Mammary epithelial cell (primary cell): ENCODE measurements at regions of chr2 and their contacts with region 1.

Region 1: DNA sequence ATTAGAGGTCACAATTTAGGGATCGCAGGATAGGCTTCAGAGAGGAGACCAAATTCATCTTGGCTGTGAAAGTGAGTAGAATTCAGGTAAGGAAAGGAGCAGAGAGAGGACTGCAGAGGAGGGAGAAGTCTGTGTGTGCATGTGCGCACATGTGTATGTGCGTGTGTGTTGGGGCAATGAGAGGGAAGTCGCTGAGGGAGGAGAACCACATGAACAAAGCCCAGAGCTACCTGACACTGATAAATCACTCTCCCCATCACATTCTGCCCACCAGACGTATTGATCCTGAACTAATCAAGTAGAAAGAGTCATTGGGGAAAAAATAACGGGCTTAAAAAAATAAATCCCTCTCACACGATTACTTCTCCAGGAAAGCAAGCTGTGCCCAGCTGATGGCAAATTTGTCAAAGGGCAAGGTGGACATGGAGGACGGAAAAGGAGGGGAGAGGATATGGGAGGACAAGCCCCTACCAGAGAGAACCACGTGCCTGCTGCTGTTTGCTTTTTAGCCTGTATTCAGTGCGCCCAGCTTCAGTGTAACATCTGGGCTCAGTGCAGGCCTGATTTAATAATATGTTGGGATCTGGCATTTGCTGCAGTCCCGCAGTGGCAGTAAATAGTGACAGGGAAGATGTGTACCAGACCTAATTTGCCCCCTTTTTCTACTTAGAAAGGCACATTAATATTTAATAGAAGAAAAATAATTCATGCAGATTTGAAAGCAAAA is 307.5 kb downstream of the C1D start:
- DNase-seq: no peak
- H3K4me3 ChIP-seq: no peak overlapping the region
- H3K27ac ChIP-seq: no peak overlapping the region
- H3K4me1 ChIP-seq: peaks cover 7% of the 10 kb centered on the region
- H3K27me3 ChIP-seq: peaks cover 2% of the 10 kb centered on the region
- CTCF ChIP-seq: no peak

Region 2: GRCh38 chr2:67790622-67791021 is 35.3 kb after region 1 on chr2:
- CTCF ChIA-PET with region 1: no interaction called
- dilution Hi-C with region 1: loop called (anchors 5 kb)
- in situ Hi-C with region 1: no loop called
- intact Hi-C with region 1: no loop called
- DNase-seq: peak; percentile 28
- H3K4me3 ChIP-seq: no peak overlapping the region
- H3K27ac ChIP-seq: no peak overlapping the region
- H3K4me1 ChIP-seq: no peaks in the 10 kb centered on the region
- H3K27me3 ChIP-seq: no peaks in the 10 kb centered on the region
- CTCF ChIP-seq: no peak